ENCODE measurements at regions of chr7 and their contacts with region 1.

Region 1: GRCh38 chr7:38796626-38797501 is 112.1 kb downstream of the VPS41 start:
- DNase-seq: peak; percentile 81
- H3K4me3 Mint-ChIP-seq: no peak overlapping the region
- H3K27ac Mint-ChIP-seq: no peak overlapping the region
- H3K4me1 Mint-ChIP-seq: no peaks in the 10 kb centered on the region
- H3K27me3 Mint-ChIP-seq: no peaks in the 10 kb centered on the region

Region 2: DNA sequence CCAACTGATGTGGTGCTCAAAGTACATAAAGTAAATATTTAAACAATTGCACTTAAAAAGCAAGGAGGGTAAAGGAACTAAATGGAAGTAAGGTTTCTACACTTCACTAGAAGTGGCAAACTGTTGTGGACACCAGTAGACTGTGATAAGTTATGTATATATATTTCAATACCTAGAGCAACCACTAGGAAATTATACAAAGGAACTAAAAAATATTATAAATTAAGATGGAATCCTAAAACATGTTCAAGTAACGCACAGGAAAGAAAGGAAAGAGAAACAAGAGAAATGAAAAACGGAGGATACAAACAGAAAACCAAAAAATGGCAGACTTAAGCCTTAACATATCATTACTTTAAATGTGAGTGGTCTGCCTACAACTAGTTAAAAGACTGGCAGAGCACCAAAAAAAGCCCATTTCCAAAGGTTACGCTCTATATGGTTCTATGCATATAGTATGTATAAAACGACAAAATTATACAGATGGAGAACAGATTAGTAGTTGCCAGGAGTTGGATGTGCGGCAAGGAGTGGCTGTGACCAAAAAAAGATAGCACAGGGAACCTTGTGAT is 93.1 kb after region 1 on chr7:
- intact Hi-C with region 1: no loop called
- DNase-seq: no peak
- H3K4me3 Mint-ChIP-seq: no peak overlapping the region
- H3K27ac Mint-ChIP-seq: no peak overlapping the region
- H3K4me1 Mint-ChIP-seq: peaks cover 6% of the 10 kb centered on the region
- H3K27me3 Mint-ChIP-seq: no peaks in the 10 kb centered on the region

Region 3: GRCh38 chr7:38908759-38909335 is 112.0 kb after region 1 on chr7 and contains the start of gene VPS41:
- intact Hi-C with region 1: loop called (anchors 5 kb)
- DNase-seq: peak; percentile 94
- H3K4me3 Mint-ChIP-seq: peak within 1 kb of the TSS; percentile 100
- H3K27ac Mint-ChIP-seq: peak within 1 kb of the TSS; percentile 98
- H3K4me1 Mint-ChIP-seq: peaks cover 24% of the 10 kb centered on the region
- H3K27me3 Mint-ChIP-seq: peaks cover 3% of the 10 kb centered on the region
- total RNA-seq, gene VPS41: 57.9 and 58.4 TPM in 2 replicates

Region 4: DNA sequence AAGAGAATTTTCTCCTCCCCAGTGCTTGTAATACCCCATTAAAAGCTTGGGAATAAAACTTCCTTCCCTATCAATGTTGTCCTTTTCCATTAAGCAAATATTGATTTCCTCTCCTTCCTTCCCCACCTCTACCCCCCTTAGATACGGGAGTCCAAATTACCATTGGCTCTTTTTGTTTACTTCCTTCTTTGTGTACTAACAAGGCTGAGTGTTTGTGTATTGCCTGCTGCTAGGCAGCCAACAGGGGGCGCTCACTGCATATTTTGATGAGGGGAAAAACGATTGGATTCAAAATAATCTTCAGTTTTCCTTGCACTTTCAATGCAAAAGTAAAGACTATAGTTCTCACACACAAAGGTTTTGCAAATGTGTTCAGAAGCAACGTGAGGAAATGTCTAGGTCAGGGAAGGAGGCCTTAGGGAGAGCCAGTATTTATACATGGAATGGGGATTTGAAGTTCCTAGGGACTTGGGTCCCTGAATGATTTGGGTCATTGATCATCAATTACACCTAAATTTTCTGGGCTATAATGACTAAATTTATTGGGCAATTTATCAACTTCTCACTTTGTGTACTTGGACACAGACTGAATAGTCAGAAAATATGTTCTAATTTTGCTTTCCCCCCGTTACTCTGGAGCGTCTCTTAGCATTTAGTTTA is 135.8 kb after region 1 on chr7:
- intact Hi-C with region 1: loop called (anchors 1 kb)
- DNase-seq: peak; percentile 83
- H3K4me3 Mint-ChIP-seq: no peak overlapping the region
- H3K27ac Mint-ChIP-seq: no peak overlapping the region
- H3K4me1 Mint-ChIP-seq: peaks cover 1% of the 10 kb centered on the region
- H3K27me3 Mint-ChIP-seq: no peaks in the 10 kb centered on the region

Region 5: DNA sequence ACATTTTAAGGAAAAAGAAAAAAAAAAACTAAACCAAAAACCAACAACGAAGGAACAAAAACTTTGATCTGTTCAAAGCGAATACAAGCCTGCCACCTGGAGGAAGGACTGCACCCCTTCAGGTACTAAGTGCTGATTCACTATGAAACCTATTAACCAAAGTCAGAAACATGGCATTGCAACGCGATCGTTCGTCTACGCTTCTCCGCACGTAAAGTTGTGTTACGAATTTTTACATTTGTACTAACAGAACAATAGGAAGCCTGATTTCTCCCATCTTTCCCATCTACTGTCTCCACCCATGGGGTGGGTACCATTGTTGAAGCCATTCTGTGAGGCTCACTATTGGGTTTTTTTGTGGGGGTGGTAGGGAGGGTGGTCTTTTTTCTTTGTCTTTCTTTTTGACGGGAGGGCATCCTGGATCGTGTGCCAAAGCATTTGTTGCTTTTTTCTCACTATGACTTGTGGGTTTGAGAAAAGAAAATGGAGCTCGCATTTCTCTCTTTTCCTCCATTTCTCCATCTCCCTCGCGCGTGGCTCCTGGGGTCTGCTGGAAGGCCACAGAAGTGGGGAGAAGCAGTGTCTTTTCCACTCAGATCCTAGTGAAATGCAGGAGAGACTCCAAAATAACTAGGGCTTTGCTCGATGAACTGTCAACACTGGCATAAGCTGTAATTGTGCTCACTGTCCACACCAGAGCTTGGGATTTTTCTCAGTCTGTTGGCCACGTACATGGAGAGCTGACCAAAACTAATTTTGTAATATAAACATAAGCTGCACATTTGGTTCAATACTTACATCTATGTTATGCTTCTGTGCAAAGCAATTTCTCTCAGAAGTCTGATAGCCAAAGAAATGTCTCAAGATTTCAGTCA is 668.4 kb after region 1 on chr7:
- intact Hi-C with region 1: loop called (anchors 1 kb)
- DNase-seq: peak; percentile 77
- H3K4me3 Mint-ChIP-seq: no peak overlapping the region
- H3K27ac Mint-ChIP-seq: no peak overlapping the region
- H3K4me1 Mint-ChIP-seq: peaks cover 2% of the 10 kb centered on the region
- H3K27me3 Mint-ChIP-seq: peaks cover 44% of the 10 kb centered on the region

Region 6: GRCh38 chr7:39517240-39517639 is 720.4 kb after region 1 on chr7:
- intact Hi-C with region 1: loop called (anchors 1 kb)
- DNase-seq: no peak
- H3K4me3 Mint-ChIP-seq: no peak overlapping the region
- H3K27ac Mint-ChIP-seq: no peak overlapping the region
- H3K4me1 Mint-ChIP-seq: no peaks in the 10 kb centered on the region
- H3K27me3 Mint-ChIP-seq: peaks cover 13% of the 10 kb centered on the region